T-cell (primary cell): ENCODE measurements at regions of chr2 and their contacts with region 1.

Region 1: DNA sequence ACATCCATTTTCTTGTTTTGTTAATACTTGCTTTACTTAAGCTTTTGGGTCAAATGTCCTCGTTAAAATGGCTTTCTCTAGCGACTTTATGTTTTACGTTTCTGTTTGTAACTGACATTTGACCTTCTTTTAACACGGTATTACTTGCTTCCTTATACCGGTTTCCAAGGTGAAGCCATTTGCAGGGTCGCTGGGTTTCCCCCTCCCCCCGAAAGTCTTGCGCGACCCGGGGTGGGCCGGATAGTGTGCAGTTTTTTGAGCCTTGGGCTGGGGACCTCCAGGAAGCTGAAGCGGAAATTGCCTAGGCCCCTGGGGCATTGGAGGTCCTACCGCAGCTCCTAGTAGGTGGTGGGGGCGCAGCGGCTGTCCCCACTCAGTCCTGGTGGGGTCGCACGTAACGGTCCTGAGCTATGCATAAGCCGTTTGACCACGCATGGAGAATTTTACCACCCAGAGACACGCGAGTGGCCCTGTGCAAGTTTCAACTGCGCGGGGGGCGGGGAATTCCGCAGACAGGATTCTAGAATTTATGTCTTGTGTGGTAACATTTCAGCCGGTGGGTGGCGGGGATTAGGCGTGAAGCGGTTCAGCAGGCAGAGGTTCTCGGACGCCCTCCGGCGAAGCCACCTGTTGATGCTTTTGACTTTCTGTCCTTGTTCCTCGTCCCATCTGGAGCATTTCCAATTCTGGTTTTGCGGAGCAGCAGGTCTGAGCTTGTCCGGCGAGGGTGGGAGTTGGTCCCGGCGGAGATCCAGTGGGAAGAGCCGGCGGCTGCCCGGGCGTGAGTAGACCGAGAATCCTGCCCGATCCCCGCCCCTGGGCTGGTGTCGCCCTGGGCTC is 2.4 kb downstream of the CFLAR start:
- DNase-seq: peak; percentile 65 to 92 (median 84)
- ATAC-seq: peak; percentile 41 to 60 (median 50)
- H3K4me3 ChIP-seq: peak overlapping the region; percentile 84 to 92
- H3K4me3 Mint-ChIP-seq: peak overlapping the region; percentile 97 to 98 (median 98)
- H3K27ac ChIP-seq: peak overlapping the region; percentile 97
- H3K27ac Mint-ChIP-seq: peak overlapping the region; percentile 99
- H3K4me1 ChIP-seq: peaks cover 38 to 50% of the 10 kb centered on the region in 2 experiments
- H3K4me1 Mint-ChIP-seq: peaks cover 57 to 82% (median 58%) of the 10 kb centered on the region in 3 donors
- H3K27me3 ChIP-seq: no peaks in the 10 kb centered on the region
- H3K27me3 Mint-ChIP-seq: no peaks in the 10 kb centered on the region

Region 2: GRCh38 chr2:201108341-201108740 is 10.0 kb before region 1 on chr2:
- CTCF ChIA-PET with region 1: interaction called in 1 of 2 experiments, 4 read pairs
- POLR2A ChIA-PET with region 1: interaction called, 3 to 10 read pairs
- DNase-seq: no peak
- ATAC-seq: no peak
- H3K4me3 ChIP-seq: no peak overlapping the region
- H3K4me3 Mint-ChIP-seq: no peak overlapping the region
- H3K27ac ChIP-seq: no peak overlapping the region
- H3K27ac Mint-ChIP-seq: no peak overlapping the region
- H3K4me1 ChIP-seq: peaks cover 0 to 1% of the 10 kb centered on the region in 2 experiments
- H3K4me1 Mint-ChIP-seq: peaks cover 0 to 6% (median 5%) of the 10 kb centered on the region in 3 donors
- H3K27me3 ChIP-seq: no peaks in the 10 kb centered on the region
- H3K27me3 Mint-ChIP-seq: no peaks in the 10 kb centered on the region

Region 3: DNA sequence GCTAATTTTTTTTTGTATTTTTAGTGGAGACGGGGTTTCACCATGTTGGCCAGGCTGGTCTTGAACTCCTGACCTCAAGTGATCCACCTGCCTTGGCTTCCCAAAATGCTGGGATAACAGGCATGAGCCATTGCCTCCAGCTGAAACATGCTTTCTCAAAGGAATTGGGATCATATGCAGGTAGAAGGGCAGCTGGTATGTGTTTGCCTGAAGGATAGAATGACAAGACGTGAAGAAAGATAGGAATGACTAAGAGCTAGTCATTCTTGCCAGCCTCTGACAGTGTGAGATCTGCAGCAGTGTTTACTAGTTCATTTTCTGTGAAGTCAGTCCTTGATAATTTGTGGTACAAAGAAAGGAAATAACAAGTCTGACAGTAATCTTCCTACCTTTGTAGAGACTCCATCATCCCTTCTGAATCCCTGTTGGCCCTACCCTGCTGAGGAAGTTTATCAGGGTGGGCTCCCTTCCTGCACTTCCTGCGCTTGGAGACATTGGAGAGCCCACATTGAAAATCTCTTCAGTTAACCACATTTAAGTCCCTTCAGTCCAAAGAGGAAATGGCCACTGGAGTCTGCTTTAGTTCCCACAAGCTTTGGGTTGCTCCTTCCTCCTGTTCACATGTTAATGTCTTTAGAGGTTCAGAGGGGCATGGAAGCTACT is 12.3 kb after region 1 on chr2:
- CTCF ChIA-PET with region 1: interaction called, 3 to 8 read pairs
- POLR2A ChIA-PET with region 1: interaction called, 7 to 20 read pairs
- DNase-seq: peak in 13 of 35 experiments; percentile 8 to 68 (median 34)
- ATAC-seq: peak; percentile 68 to 74 (median 72)
- H3K4me3 ChIP-seq: peak overlapping the region in 1 of 2 donors; percentile 8
- H3K4me3 Mint-ChIP-seq: peak overlapping the region; percentile 54 to 73 (median 71)
- H3K27ac ChIP-seq: peak overlapping the region; percentile 97
- H3K27ac Mint-ChIP-seq: peak overlapping the region; percentile 99 to 100
- H3K4me1 ChIP-seq: peaks cover 60 to 71% of the 10 kb centered on the region in 2 experiments
- H3K4me1 Mint-ChIP-seq: peaks cover 76 to 80% (median 77%) of the 10 kb centered on the region in 3 donors
- H3K27me3 ChIP-seq: no peaks in the 10 kb centered on the region
- H3K27me3 Mint-ChIP-seq: no peaks in the 10 kb centered on the region

Region 4: DNA sequence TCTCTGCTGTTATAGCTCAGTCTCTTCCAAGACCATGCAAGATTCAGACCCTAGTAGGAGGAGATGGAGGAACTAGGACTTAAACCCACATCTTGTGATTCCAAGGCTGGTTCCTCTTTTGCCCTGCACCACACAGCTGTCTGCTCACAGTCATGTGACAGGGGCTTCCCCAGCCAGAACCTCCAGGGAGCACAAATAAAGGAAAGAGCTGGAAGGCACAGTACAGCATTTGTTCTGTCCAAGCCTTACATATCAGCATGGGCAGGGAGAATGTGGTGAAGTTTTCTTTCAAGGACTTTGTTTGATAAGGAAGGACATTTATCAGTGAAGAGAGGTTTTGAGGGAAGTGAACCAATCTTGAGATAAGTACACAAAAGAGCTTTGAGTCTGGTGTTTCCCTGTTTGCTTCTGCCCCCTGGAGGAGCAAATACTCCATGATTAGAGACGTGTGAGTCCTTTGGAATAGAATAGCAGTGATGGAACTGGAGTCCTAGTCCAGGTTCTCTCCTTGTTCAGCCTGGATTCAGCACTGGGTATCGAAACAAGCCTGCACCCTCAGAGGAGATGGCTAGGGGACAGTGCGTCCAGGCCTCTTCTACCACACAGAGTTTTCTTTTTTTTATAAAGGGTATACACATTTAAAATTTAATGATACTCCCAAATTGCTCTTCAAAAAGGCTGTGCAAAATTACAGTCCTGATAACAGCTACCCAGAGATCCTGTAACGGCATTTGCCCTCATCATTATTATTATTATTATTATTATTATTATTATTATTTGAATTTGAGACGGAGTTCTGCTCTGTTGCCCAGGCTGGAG is 40.0 kb after region 1 on chr2:
- CTCF ChIA-PET with region 1: interaction called, 12 to 58 read pairs
- POLR2A ChIA-PET with region 1: interaction called, 3 to 5 read pairs
- DNase-seq: peak in 34 of 35 experiments; percentile 25 to 81 (median 58)
- ATAC-seq: peak; percentile 84 to 95 (median 86)
- H3K4me3 ChIP-seq: no peak overlapping the region
- H3K4me3 Mint-ChIP-seq: no peak overlapping the region
- H3K27ac ChIP-seq: peak overlapping the region; percentile 71
- H3K27ac Mint-ChIP-seq: peak overlapping the region; percentile 85 to 88
- H3K4me1 ChIP-seq: peaks cover 0 to 12% of the 10 kb centered on the region in 2 experiments
- H3K4me1 Mint-ChIP-seq: peaks cover 17 to 30% (median 18%) of the 10 kb centered on the region in 3 donors
- H3K27me3 ChIP-seq: no peaks in the 10 kb centered on the region
- H3K27me3 Mint-ChIP-seq: no peaks in the 10 kb centered on the region